ENCODE measurements at regions of chr10 and their contacts with region 1.

Region 1: DNA sequence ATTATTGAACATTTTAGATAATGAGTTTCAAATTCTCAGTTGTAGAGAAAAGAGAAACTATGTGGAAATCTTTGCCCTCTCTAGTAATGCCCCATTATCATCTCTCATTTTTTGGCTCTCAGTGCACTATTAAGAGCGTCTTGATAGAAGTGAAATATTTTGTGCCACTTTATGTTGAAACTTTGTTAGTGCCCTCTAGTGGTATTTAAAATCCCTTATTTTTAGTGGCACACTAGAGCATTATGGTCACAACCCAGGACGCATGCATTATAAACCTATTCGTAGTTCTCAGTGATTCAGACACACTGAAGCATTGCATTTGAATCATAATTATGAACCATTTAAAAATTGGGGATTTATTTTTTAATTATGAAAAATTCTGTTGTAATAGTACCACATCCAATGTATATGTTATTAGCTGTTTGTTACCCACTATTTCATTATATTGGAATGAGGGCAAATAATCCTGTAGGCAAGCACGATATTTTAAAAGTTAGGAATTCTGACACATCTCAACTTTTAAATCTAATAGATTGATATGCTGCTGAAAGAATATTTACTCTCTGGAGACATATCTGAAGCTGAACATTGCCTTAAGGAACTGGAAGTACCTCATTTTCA is 21.9 kb downstream of the PDCD4 start:
- DNase-seq: peak in 2 of 9 experiments; percentile 63 to 76
- ATAC-seq: peak; percentile 65
- H3K4me3 ChIP-seq: no peak overlapping the region
- H3K4me3 Mint-ChIP-seq: no peak overlapping the region
- H3K27ac ChIP-seq: no peak overlapping the region
- H3K27ac Mint-ChIP-seq: peak overlapping the region; percentile 47
- H3K4me1 ChIP-seq: peaks cover 9% of the 10 kb centered on the region
- H3K4me1 Mint-ChIP-seq: peaks cover 61% of the 10 kb centered on the region
- H3K27me3 ChIP-seq: no peaks in the 10 kb centered on the region
- H3K27me3 Mint-ChIP-seq: no peaks in the 10 kb centered on the region
- CTCF ChIP-seq: peak; percentile 45

Region 2: GRCh38 chr10:110610308-110610774 is 283.3 kb before region 1 on chr10:
- CTCF ChIA-PET with region 1: interaction called, 5 read pairs
- POLR2A ChIA-PET with region 1: no interaction called
- intact Hi-C with region 1: loop called (anchors 2 to 5 kb)
- DNase-seq: peak in 8 of 9 experiments; percentile 19 to 73 (median 56)
- ATAC-seq: peak; percentile 77
- H3K4me3 ChIP-seq: no peak overlapping the region
- H3K4me3 Mint-ChIP-seq: no peak overlapping the region
- H3K27ac ChIP-seq: no peak overlapping the region
- H3K27ac Mint-ChIP-seq: no peak overlapping the region
- H3K4me1 ChIP-seq: no peaks in the 10 kb centered on the region
- H3K4me1 Mint-ChIP-seq: peaks cover 10% of the 10 kb centered on the region
- H3K27me3 ChIP-seq: no peaks in the 10 kb centered on the region
- H3K27me3 Mint-ChIP-seq: no peaks in the 10 kb centered on the region
- CTCF ChIP-seq: peak; percentile 84

Region 3: DNA sequence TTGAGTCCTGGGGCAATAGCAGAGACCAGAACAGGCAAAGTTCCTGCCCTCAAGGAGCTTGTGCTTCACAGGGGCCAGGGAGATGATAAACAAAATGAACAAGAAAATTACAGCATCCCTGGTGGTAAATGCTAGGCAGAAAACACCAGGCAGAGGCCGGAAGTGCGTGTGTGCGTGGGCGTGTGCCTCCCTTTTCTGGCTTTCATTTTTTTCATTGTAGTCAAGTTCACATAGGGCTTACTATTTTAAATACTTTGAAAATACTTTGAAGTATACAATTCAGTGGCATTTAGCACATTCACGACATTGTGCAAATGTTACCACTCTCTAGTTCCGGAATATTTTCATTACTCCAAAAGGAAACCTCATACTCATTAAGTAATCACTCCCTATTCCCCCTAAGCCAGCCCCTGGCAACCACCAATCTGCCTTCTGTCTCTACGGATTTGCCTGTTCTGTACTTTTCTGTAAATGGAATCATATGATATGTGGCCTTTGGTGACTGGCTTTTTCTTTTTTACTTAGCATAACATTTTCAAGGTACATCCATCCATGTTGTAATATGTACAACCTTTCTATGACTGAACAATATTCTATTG is 110.1 kb before region 1 on chr10:
- CTCF ChIA-PET with region 1: interaction called, 19 read pairs
- POLR2A ChIA-PET with region 1: interaction called, 3 read pairs
- intact Hi-C with region 1: no loop called
- DNase-seq: peak; percentile 42 to 91 (median 73)
- ATAC-seq: peak; percentile 87
- H3K4me3 ChIP-seq: no peak overlapping the region
- H3K4me3 Mint-ChIP-seq: peak overlapping the region; percentile 40
- H3K27ac ChIP-seq: peak overlapping the region; percentile 40 to 67
- H3K27ac Mint-ChIP-seq: peak overlapping the region; percentile 94
- H3K4me1 ChIP-seq: peaks cover 21% of the 10 kb centered on the region
- H3K4me1 Mint-ChIP-seq: peaks cover 46% of the 10 kb centered on the region
- H3K27me3 ChIP-seq: no peaks in the 10 kb centered on the region
- H3K27me3 Mint-ChIP-seq: no peaks in the 10 kb centered on the region
- CTCF ChIP-seq: no peak

Region 4: DNA sequence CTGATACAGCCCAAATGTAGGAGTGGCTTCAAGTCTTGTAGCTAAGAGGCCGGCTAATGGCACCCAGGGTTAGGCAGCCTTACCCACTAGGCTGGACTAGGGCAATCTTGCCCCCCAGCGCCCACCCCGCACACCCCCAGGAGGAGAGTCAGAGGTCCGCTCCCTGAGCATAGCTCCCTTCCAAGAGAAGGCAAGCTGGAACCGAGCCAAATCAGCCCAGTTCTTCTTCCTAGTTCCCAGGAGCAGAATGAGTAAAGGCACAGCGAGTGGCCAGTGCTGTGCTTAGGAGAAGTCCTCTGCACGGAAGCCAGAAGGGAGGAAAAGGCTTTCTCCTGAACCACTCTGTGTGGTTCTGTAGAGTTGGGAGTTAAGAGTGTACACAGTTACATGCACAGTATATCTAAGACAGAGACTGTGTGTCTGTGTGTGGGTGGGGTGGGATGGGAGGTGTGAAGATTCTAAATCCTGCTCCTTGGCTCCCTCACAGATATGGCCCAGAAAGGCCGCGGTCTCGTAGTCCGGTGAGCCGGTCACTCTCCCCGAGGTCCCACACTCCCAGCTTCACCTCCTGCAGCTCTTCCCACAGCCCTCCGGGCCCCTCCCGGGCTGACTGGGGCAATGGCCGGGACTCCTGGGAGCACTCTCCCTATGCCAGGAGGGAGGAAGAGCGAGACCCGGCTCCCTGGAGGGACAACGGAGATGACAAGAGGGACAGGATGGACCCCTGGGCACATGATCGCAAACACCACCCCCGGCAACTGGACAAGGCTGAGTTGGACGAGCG is 81.7 kb before region 1 on chr10:
- CTCF ChIA-PET with region 1: interaction called, 10 read pairs
- POLR2A ChIA-PET with region 1: no interaction called
- intact Hi-C with region 1: no loop called
- DNase-seq: no peak
- ATAC-seq: no peak
- H3K4me3 ChIP-seq: no peak overlapping the region
- H3K4me3 Mint-ChIP-seq: no peak overlapping the region
- H3K27ac ChIP-seq: no peak overlapping the region
- H3K27ac Mint-ChIP-seq: no peak overlapping the region
- H3K4me1 ChIP-seq: peaks cover 8% of the 10 kb centered on the region
- H3K4me1 Mint-ChIP-seq: peaks cover 34% of the 10 kb centered on the region
- H3K27me3 ChIP-seq: no peaks in the 10 kb centered on the region
- H3K27me3 Mint-ChIP-seq: no peaks in the 10 kb centered on the region
- CTCF ChIP-seq: no peak

Region 5: DNA sequence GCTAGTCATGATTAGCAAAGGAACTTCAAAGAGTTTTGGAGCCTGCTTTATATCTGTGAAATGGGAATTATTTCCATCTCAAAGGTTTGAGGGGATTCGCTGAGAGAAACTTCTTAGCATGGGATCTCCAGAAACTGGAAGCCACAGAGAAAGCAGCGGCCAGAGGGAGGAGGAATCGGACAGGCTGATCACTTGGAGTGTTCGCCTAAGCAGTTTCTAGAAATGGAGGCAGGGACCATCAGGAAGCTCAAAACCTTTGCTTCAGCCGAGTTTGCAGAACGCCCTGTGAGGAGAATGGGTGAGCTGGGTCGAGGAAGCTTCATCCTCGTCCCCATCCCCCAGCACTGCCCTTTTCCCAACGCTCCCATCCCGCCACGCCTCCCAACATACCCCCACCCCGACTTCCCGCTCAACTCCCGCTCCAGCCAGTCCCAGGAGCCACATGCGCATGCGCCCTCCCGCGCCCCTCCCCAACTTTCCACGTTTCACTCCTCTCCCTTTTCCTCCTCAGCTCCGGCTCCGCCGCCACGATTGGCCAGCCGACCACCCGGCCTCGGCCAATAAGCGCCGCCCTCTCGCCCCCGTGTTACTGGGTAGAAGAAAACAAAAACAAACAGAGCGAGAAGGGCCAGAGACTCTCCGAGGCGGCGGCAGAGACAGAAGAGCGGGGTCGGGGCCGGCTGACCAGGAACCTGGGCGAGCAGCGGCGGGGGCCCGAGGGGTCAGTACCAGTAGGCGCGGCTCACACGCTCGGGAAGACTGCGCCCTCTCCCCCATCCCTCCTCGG is 22.2 kb before region 1 on chr10 and contains the start of gene PDCD4:
- CTCF ChIA-PET with region 1: interaction called, 7 read pairs
- POLR2A ChIA-PET with region 1: interaction called, 3 read pairs
- intact Hi-C with region 1: loop called in 1 of 2 experiments (anchors 1 kb)
- DNase-seq: peak; percentile 87 to 96 (median 94)
- ATAC-seq: peak; percentile 58
- H3K4me3 ChIP-seq: peak within 1 kb of the TSS; percentile 55 to 85
- H3K4me3 Mint-ChIP-seq: peak within 1 kb of the TSS; percentile 89
- H3K27ac ChIP-seq: peak within 1 kb of the TSS; percentile 78 to 97
- H3K27ac Mint-ChIP-seq: peak within 1 kb of the TSS; percentile 98
- H3K4me1 ChIP-seq: peaks cover 71% of the 10 kb centered on the region
- H3K4me1 Mint-ChIP-seq: peaks cover 67% of the 10 kb centered on the region
- H3K27me3 ChIP-seq: no peaks in the 10 kb centered on the region
- H3K27me3 Mint-ChIP-seq: no peaks in the 10 kb centered on the region
- CTCF ChIP-seq: no peak
- total RNA-seq, gene PDCD4: 672 to 688 TPM

Region 6: GRCh38 chr10:111128331-111129180 is 234.9 kb after region 1 on chr10:
- CTCF ChIA-PET with region 1: no interaction called
- POLR2A ChIA-PET with region 1: no interaction called
- intact Hi-C with region 1: no loop called
- DNase-seq: no peak
- ATAC-seq: no peak
- H3K4me3 ChIP-seq: no peak overlapping the region
- H3K4me3 Mint-ChIP-seq: no peak overlapping the region
- H3K27ac ChIP-seq: no peak overlapping the region
- H3K27ac Mint-ChIP-seq: no peak overlapping the region
- H3K4me1 ChIP-seq: no peaks in the 10 kb centered on the region
- H3K4me1 Mint-ChIP-seq: no peaks in the 10 kb centered on the region
- H3K27me3 ChIP-seq: no peaks in the 10 kb centered on the region
- H3K27me3 Mint-ChIP-seq: peaks cover 17% of the 10 kb centered on the region
- CTCF ChIP-seq: no peak